Naive thymus-derived CD8-positive, alpha-beta T cell (primary cell): ENCODE measurements at regions of chr16 and their contacts with region 1.

Region 1: DNA sequence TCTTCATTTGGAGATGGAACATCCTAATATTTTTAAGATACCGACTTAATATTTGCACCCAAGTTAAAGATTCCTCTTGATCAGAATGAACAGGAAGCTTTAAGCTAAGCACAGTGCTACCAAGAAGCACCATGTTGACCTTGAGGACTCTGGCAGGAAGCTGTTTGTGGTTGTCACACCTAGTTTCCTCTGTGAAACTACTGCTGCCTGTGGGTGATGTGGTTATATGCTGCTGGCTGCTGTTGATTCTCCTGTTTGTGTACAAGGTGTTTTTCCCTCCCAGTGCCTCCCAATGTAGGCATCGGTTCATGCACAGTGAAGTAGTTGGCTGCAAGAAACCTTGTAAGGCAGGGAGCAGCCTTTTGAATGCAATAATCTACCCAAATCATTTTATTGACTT is 23.4 kb downstream of the RBL2 start:
- DNase-seq: peak; percentile 25 to 93 (median 82)
- ATAC-seq: peak; percentile 77 to 82
- H3K4me3 Mint-ChIP-seq: peak overlapping the region; percentile 76 to 92 (median 88)
- H3K27ac Mint-ChIP-seq: peak overlapping the region; percentile 89 to 98 (median 96)
- H3K4me1 Mint-ChIP-seq: peaks cover 37 to 94% (median 86%) of the 10 kb centered on the region in 4 donors
- H3K27me3 Mint-ChIP-seq: no peaks in the 10 kb centered on the region

Region 2: GRCh38 chr16:53061701-53062159 is 395.9 kb before region 1 on chr16:
- POLR2A ChIA-PET with region 1: no interaction called
- DNase-seq: peak in 2 of 10 donors; percentile 7 to 24
- ATAC-seq: peak; percentile 45 to 79
- H3K4me3 Mint-ChIP-seq: peak overlapping the region in 8 of 10 donors; percentile 13 to 71 (median 32)
- H3K27ac Mint-ChIP-seq: peak overlapping the region in 6 of 10 donors; percentile 4 to 85 (median 72)
- H3K4me1 Mint-ChIP-seq: peaks cover 12 to 68% (median 35%) of the 10 kb centered on the region in 4 donors
- H3K27me3 Mint-ChIP-seq: no peaks in the 10 kb centered on the region

Region 3: GRCh38 chr16:53235851-53236250 is 221.8 kb before region 1 on chr16:
- POLR2A ChIA-PET with region 1: no interaction called
- DNase-seq: no peak
- ATAC-seq: no peak
- H3K4me3 Mint-ChIP-seq: no peak overlapping the region
- H3K27ac Mint-ChIP-seq: peak overlapping the region in 1 of 10 donors; percentile 21
- H3K4me1 Mint-ChIP-seq: peaks cover 0 to 2% (median 0%) of the 10 kb centered on the region in 4 donors
- H3K27me3 Mint-ChIP-seq: no peaks in the 10 kb centered on the region

Region 4: DNA sequence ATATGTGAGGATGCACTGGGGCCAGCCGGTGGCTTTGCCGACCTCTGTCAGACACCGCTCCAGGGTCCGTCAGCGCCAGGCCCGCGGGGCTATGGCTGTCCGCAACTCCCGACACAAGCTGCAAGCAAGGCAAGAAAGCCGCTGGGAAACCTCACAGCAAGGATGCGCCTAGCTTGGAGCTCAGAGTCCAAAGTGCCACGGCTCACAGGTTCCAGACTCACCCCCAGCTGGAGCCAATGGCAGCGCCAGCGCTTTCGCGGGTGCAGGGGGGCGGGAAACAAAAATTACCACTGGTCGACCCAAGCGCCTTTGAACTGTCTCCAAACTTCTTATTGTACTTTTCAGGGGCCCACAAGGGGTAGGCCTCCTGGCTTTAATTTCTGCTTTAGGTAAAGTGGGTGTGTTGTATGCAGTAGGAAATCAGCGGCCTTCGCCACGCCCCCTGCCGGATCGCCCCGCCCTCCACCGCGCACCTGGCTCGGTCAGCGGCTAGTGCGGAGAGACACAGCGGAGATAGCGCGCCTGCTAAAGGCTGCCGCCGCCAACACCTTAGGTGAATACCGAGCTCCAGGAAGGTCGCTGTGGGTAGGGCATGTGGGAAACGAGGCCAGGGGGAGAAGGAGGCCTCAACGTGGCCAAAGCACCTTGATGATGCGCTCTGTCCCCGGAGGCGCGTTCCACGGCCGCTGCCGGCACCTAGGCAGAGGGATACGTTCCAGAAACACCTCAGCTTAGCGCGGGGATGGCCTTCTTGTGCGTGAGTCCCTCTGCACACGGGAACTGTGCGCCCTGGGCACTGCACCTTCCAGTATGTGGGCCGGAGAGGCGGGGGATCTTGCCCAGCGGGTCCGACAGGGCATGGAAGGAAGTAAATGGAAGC is 84.4 kb before region 1 on chr16:
- POLR2A ChIA-PET with region 1: interaction called, 16 read pairs
- DNase-seq: peak; percentile 64 to 90 (median 82)
- ATAC-seq: peak; percentile 93 to 94
- H3K4me3 Mint-ChIP-seq: no peak overlapping the region
- H3K27ac Mint-ChIP-seq: peak overlapping the region in 5 of 10 donors; percentile 72 to 92 (median 79)
- H3K4me1 Mint-ChIP-seq: peaks cover 12 to 36% (median 29%) of the 10 kb centered on the region in 4 donors
- H3K27me3 Mint-ChIP-seq: peaks cover 0 to 13% (median 0%) of the 10 kb centered on the region in 5 donors

Region 5: DNA sequence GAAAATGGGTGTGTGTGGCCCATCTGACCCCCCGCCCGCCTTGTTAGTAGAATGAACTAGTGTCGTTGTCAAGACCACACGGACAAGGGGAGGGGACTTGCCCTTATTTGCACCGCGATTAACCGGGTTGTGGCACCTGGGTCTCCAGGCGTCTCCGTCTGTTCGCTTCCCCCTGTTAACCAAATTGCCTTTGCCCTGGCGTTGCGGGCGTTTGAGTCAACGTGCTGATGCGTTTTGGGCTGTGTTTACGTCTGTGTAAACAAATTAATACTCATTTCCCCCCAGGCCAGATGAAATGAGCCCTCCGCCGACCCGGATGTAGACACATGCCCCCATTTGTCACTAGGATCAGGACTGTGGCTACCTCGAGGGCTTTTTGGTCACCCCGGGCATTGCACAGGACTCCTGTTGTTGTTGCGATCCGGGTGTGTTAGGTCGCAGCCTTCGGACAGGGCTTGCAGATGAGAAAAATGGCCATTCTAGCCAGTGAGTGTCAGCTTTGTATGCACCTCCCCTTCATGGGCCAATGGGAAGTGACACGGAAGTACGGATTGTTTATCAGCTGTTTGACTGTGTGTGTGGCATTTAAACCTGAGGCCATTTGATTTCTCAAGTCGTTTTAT is 22.5 kb before region 1 on chr16:
- POLR2A ChIA-PET with region 1: interaction called, 564 read pairs
- DNase-seq: peak; percentile 36 to 83 (median 67)
- ATAC-seq: peak; percentile 64 to 65
- H3K4me3 Mint-ChIP-seq: peak overlapping the region; percentile 92 to 99 (median 98)
- H3K27ac Mint-ChIP-seq: peak overlapping the region; percentile 95 to 99 (median 98)
- H3K4me1 Mint-ChIP-seq: peaks cover 12 to 50% (median 31%) of the 10 kb centered on the region in 4 donors
- H3K27me3 Mint-ChIP-seq: no peaks in the 10 kb centered on the region

Region 6: GRCh38 chr16:53482123-53482522 is 24.5 kb after region 1 on chr16:
- POLR2A ChIA-PET with region 1: interaction called, 17 read pairs
- DNase-seq: no peak
- ATAC-seq: no peak
- H3K4me3 Mint-ChIP-seq: no peak overlapping the region
- H3K27ac Mint-ChIP-seq: peak overlapping the region; percentile 36 to 91 (median 64)
- H3K4me1 Mint-ChIP-seq: peaks cover 17 to 47% (median 35%) of the 10 kb centered on the region in 4 donors
- H3K27me3 Mint-ChIP-seq: no peaks in the 10 kb centered on the region

Region 7: DNA sequence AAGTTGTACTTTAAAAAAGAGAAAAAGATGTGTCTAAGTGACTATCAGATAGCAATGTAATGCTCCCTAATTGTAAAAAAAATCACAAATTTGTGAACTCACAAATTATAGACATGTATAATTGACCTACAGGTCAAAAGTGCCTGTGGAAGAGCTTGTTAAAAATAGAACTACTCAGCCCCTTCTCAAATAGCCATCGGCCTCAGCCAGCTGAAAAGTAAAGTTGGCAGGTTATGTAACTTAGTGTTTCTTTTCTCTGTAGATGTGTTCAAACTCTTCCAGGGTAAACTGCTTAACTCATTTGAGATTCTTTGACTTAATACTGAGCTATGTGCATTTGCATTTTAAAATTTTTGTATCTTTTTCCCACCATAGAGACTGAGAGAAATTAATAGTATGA is 32.1 kb after region 1 on chr16:
- POLR2A ChIA-PET with region 1: interaction called, 152 read pairs
- DNase-seq: no peak
- ATAC-seq: no peak
- H3K4me3 Mint-ChIP-seq: peak overlapping the region in 6 of 10 donors; percentile 3 to 58 (median 30)
- H3K27ac Mint-ChIP-seq: peak overlapping the region; percentile 14 to 95 (median 83)
- H3K4me1 Mint-ChIP-seq: peaks cover 24 to 58% (median 46%) of the 10 kb centered on the region in 4 donors
- H3K27me3 Mint-ChIP-seq: no peaks in the 10 kb centered on the region

Region 8: DNA sequence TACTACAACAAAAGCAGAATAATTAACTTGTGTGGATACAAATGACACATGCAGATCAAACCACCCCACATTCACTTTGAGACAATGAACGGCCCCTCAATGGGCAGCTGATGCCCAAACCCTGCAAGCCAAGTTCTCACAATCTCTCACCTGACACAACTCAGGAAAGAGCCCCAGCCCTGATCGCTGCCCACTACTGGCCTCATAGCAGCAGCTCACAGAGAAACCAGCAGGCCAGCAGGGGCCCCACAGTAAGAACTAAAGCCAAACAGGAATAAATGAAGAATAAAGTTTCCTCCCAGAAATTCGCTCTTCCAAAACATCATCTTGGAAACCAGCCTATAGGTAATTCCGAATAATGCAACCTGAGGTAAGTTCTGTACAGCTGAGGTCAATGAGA is 37.7 kb after region 1 on chr16:
- POLR2A ChIA-PET with region 1: interaction called, 152 read pairs
- DNase-seq: no peak
- ATAC-seq: peak; percentile 34 to 43
- H3K4me3 Mint-ChIP-seq: peak overlapping the region in 3 of 10 donors; percentile 10 to 52 (median 15)
- H3K27ac Mint-ChIP-seq: peak overlapping the region; percentile 4 to 82 (median 57)
- H3K4me1 Mint-ChIP-seq: peaks cover 32 to 80% (median 64%) of the 10 kb centered on the region in 4 donors
- H3K27me3 Mint-ChIP-seq: no peaks in the 10 kb centered on the region

Region 9: DNA sequence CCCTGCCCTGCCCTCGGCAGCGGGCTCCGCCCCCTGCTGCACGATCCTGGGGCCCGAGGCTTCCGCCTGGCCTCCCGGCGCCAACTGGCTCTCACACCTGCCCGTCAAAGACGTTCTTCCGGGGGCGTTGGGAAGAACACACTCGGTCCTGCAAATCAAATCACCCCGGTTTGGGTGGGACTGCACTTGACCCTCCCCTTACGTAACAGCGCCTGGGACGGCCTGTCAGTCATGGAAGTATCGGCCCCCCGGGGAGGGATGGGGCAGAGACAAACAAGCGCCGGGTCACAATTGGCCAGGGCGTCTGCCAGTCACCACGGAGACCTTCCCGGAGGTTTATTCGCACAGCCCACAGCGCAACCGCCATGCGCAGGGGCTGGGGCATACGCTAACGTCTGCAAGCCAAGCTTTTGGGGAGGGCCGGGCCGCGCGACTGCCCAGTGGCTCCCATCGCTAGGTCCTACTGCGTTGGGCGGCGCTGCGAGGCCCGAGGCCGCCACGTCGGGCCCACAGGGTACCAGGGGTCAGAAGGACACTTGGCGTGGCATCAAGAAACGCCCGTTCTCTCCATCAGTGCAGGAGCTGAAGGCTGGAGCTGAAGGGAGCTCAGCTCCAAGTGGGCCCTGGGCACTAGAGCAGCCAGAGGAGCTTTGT is 45.7 kb after region 1 on chr16:
- POLR2A ChIA-PET with region 1: interaction called, 152 read pairs
- DNase-seq: peak; percentile 97 to 100 (median 100)
- ATAC-seq: peak; percentile 86 to 88
- H3K4me3 Mint-ChIP-seq: peak overlapping the region; percentile 87 to 98 (median 94)
- H3K27ac Mint-ChIP-seq: peak overlapping the region; percentile 87 to 97 (median 94)
- H3K4me1 Mint-ChIP-seq: peaks cover 20 to 59% (median 51%) of the 10 kb centered on the region in 4 donors
- H3K27me3 Mint-ChIP-seq: no peaks in the 10 kb centered on the region